Motor neuron (in vitro differentiated cells): ENCODE measurements at regions of chr22 and their contacts with region 1.

Region 1: GRCh38 chr22:31148953-31149627 is 8.8 kb upstream of the PLA2G3 start:
- ATAC-seq: peak; percentile 75 to 100 (median 95)
- H3K4me3 ChIP-seq: no peak overlapping the region
- H3K27ac ChIP-seq: no peak overlapping the region
- H3K4me1 ChIP-seq: no peaks in the 10 kb centered on the region

Region 2: DNA sequence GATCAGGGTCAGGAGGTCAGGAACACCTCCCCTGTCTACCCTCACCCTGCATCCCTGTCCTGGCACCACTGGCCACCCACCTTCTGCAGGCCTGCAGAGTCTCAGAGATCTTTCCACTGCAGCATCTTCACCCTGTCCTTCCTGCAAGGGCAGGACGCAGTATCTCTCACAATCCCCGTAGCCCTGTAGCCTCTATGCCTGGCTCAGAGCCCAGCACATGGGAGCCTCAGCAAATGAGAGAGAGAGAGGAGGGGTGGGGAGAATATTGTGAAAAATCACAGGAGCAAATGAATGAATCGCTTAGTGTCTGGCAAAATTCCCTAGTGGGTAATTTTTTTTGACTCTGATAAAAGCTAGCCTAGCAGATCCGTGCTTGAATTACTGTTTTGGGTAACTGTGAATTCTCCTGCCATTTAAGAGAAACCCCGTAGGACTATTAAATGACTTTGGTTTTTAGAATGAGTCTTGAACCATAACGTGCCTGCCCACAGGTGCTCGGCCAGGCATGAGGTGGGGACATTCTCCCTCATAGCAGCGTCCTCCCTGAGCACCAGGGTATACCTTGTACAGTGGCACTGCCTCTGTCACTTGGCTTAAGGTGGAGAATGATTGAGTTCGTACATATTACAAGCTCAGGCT is 272.1 kb before region 1 on chr22:
- in situ Hi-C with region 1: no loop called
- ATAC-seq: peak; percentile 41 to 95 (median 64)
- H3K4me3 ChIP-seq: no peak overlapping the region
- H3K27ac ChIP-seq: peak overlapping the region in 1 of 2 donors; percentile 40
- H3K4me1 ChIP-seq: peaks cover 49 to 55% of the 10 kb centered on the region in 2 donors

Region 3: GRCh38 chr22:31230871-31231621 is 82.0 kb after region 1 on chr22:
- in situ Hi-C with region 1: loop called in 1 of 9 experiments (anchors 25 kb)
- ATAC-seq: peak in 6 of 8 experiments; percentile 40 to 88 (median 81)
- H3K4me3 ChIP-seq: no peak overlapping the region
- H3K27ac ChIP-seq: no peak overlapping the region
- H3K4me1 ChIP-seq: peaks cover 0 to 8% of the 10 kb centered on the region in 2 donors

Region 4: DNA sequence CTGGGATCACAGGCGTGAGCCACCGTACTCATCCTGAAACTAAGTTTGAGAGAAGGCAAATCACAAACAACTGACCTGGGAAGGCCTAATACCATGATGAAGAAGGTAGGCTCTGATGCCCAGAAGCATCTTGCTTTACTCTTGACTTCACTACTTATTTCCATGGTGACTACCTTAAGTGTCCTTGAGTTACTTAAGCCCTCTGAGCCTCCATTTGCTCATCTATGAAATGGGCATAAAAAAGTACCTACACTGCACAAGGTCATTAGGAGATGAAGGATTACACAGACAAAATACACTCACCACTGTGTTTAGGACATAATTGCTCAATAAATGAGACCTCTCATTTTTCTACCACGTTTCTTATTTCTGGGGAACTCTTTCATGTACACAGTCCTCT is 312.6 kb after region 1 on chr22:
- in situ Hi-C with region 1: no loop called
- ATAC-seq: no peak
- H3K4me3 ChIP-seq: no peak overlapping the region
- H3K27ac ChIP-seq: no peak overlapping the region
- H3K4me1 ChIP-seq: no peaks in the 10 kb centered on the region